ENCODE measurements at regions of chr4 and their contacts with region 1.

Region 1: DNA sequence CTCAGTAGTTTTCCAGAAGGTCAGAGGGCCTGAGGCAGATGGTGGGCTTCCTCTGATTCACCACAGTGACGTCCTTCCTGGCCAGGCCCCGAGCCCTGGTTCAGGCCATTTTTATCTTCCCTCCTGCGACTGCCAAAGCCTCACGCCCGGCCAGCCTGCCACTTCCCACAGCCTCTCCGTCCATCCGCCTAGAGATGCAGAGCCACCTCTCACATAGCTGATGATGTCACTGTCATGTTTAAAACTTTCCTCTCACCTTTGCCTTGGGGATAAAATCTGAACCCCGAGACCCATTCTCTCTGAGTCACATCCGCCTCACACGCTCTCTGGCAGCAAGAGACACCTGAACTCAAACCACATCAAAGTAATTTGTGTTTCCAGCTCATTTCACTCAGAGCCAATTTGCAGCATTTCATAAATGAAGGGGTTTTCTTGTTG is 175.3 kb downstream of the QDPR start:
- DNase-seq: peak in 2 of 5 donors; percentile 25 to 31
- ATAC-seq: peak in 3 of 4 donors; percentile 36 to 90 (median 45)
- H3K4me3 ChIP-seq: no peak overlapping the region
- H3K27ac ChIP-seq: no peak overlapping the region
- H3K4me1 ChIP-seq: no peaks in the 10 kb centered on the region
- H3K27me3 ChIP-seq: no peaks in the 10 kb centered on the region
- CTCF ChIP-seq: no peak
- POLR2A ChIP-seq: no peak

Region 2: GRCh38 chr4:16450724-16451123 is 885.8 kb before region 1 on chr4:
- intact Hi-C with region 1: loop called in 1 of 10 experiments (anchors 10 kb)
- DNase-seq: no peak
- ATAC-seq: no peak
- H3K4me3 ChIP-seq: no peak overlapping the region
- H3K27ac ChIP-seq: no peak overlapping the region
- H3K4me1 ChIP-seq: no peaks in the 10 kb centered on the region
- H3K27me3 ChIP-seq: no peaks in the 10 kb centered on the region
- CTCF ChIP-seq: peak in 9 of 12 donors; percentile 12 to 41 (median 32)
- POLR2A ChIP-seq: no peak

Region 3: DNA sequence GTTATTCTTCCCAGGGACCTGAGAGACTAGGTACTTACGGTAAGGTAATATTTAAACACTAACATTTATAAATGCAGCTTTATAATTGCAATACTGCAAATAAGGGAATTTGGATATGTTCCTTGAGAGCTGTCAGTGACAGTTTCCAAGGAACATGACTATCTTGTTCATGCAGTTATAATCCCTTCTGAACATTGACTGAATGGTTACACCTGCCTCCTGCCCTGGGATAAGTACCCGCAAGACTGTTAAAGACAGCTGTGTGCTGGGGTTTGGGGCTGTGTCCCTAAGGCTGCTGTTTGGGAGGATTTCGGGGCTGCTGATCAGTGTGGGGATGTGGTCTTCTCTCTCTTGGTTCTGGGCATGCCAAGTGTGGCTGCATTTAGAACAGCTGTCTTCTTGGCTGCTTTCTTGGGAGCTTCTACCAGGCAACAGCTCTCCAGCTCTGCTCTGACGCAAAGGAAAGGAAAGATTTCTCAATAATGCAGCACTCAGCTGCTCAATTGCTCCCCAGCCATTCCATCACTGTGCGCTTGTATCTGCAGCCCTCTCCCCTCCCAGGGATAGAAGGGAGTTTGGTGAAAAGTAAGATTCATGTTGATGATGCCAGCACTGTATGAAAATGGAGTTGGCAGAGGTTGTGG is 811.5 kb before region 1 on chr4:
- intact Hi-C with region 1: loop called in 1 of 10 experiments (anchors 5 kb)
- DNase-seq: peak in 3 of 5 donors; percentile 23 to 55 (median 54)
- ATAC-seq: peak; percentile 72 to 95 (median 84)
- H3K4me3 ChIP-seq: no peak overlapping the region
- H3K27ac ChIP-seq: no peak overlapping the region
- H3K4me1 ChIP-seq: peaks cover 0 to 27% (median 2%) of the 10 kb centered on the region in 12 donors
- H3K27me3 ChIP-seq: no peaks in the 10 kb centered on the region
- CTCF ChIP-seq: no peak
- POLR2A ChIP-seq: no peak

Region 4: DNA sequence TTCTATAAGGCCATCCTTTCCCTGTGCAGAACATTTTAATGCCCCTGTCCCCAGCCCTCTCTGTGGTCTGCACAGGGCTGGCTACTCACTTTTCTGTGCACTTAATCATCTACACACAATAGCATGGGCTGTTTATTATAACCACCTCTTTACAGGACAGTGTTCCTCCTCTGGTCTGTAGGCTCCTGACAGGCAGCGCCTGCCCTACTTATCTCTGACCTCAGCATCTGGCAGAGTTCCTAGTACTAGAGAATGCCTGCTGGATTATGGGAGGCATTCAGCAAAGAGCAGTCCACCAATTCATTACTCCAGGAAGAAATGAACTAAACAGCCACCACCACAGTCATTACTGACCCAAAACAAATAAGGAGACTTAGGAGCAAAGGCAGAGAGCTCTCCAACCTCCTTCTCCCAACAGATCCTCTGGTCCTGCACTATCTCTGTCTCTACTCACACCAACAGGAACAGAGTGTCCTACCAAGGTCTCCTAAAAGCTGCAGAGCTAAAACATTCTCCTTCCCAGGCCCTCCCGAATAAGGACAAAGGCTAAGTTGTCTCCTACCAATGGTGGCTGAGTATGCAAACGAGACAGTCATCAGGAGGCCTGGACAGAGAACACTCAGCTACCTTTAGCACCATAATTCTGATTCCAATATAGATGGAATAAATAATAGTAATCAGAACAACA is 103.8 kb before region 1 on chr4:
- intact Hi-C with region 1: no loop called
- DNase-seq: peak in 4 of 5 donors; percentile 65 to 73 (median 68)
- ATAC-seq: peak; percentile 95 to 98 (median 96)
- H3K4me3 ChIP-seq: no peak overlapping the region
- H3K27ac ChIP-seq: peak overlapping the region; percentile 61 to 87 (median 80)
- H3K4me1 ChIP-seq: peaks cover 0 to 27% (median 16%) of the 10 kb centered on the region in 12 donors
- H3K27me3 ChIP-seq: no peaks in the 10 kb centered on the region
- CTCF ChIP-seq: no peak
- POLR2A ChIP-seq: no peak

Region 5: DNA sequence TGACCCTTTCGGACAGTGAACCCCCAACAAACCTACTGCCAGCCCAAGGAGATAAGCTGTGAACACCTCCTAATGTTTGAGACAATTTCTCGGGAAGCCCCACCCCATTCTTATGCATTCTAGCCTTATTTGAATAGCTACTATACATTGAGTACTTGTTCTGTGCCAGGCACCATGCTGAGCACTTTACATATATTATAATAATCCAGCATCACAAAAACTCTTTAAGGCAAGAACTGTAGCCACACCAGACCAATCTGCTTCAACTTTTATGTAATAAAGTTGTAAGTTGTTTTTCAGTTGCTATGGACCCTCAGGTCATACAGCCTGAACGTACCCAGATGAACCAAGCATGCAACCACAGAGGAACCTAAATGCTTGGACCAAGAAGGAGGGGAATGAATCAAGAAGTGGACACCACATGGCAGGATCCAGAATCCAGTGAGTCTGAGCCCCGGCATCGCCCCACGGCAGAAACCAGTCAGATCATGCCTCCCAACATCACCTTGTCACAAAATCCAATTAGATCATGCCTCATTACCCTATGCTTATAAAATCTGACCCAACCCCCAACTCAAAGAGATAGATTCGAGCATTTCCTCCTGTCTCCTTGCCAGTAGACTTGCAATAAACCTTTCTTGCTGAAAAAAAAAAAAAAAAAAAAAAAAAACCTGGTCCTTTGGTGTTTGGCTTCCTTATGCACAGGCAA is 49.6 kb before region 1 on chr4:
- intact Hi-C with region 1: no loop called
- DNase-seq: no peak
- ATAC-seq: no peak
- H3K4me3 ChIP-seq: no peak overlapping the region
- H3K27ac ChIP-seq: no peak overlapping the region
- H3K4me1 ChIP-seq: peaks cover 0 to 18% (median 9%) of the 10 kb centered on the region in 12 donors
- H3K27me3 ChIP-seq: no peaks in the 10 kb centered on the region
- CTCF ChIP-seq: no peak
- POLR2A ChIP-seq: no peak